ENCODE measurements at regions of chr15 and their contacts with region 1.

Region 1: GRCh38 chr15:94287794-94288246 is 56.5 kb downstream of the MCTP2 start:
- DNase-seq: peak; percentile 68 to 78
- ATAC-seq: peak; percentile 91 to 99 (median 96)
- H3K4me3 ChIP-seq: peak overlapping the region; percentile 22
- H3K4me3 Mint-ChIP-seq: peak overlapping the region; percentile 88
- H3K27ac ChIP-seq: peak overlapping the region; percentile 93
- H3K27ac Mint-ChIP-seq: peak overlapping the region in 1 of 2 donors; percentile 93
- H3K4me1 ChIP-seq: peaks cover 33% of the 10 kb centered on the region
- H3K4me1 Mint-ChIP-seq: peaks cover 88 to 92% of the 10 kb centered on the region in 2 donors
- H3K27me3 ChIP-seq: no peaks in the 10 kb centered on the region
- H3K27me3 Mint-ChIP-seq: no peaks in the 10 kb centered on the region
- CTCF ChIP-seq: no peak

Region 2: DNA sequence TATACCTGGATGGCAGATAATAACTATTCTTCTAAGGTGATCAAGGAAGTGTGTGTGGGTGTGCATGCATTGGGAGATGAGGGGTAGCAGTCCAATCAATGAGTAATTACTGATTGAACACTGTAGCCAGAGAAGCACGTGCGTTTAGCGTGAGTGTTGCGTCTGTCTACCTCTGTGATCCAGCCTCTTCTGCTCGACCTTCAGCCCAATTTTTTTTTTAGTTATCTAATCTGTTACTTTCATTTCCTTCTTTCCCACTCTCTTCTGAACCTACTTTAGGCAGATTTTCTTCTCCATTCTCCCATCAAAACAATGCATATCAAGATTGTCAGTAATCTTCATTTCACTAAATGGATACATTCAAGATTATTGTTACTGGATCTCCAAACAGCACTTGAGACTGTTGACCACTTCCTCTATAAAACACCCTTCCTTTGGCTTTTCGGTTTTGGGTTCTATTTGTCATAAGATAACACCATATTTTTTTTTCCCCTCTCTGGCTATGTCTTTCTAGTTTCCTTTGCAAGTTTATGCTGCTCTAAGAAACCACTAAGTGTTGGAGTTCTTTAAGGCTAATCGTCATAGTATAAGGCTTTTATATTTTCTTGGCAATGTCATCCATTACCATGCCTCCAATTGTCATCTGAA is 15.4 kb before region 1 on chr15:
- intact Hi-C with region 1: loop called (anchors 1 kb)
- DNase-seq: peak in 1 of 2 donors; percentile 62
- ATAC-seq: peak; percentile 74 to 88 (median 86)
- H3K4me3 ChIP-seq: no peak overlapping the region
- H3K4me3 Mint-ChIP-seq: no peak overlapping the region
- H3K27ac ChIP-seq: peak overlapping the region; percentile 93
- H3K27ac Mint-ChIP-seq: no peak overlapping the region
- H3K4me1 ChIP-seq: peaks cover 41% of the 10 kb centered on the region
- H3K4me1 Mint-ChIP-seq: peaks cover 14 to 23% of the 10 kb centered on the region in 2 donors
- H3K27me3 ChIP-seq: no peaks in the 10 kb centered on the region
- H3K27me3 Mint-ChIP-seq: no peaks in the 10 kb centered on the region
- CTCF ChIP-seq: no peak